Activated CD8-positive, alpha-beta T cell treated with anti-CD3 and anti-CD28 coated beads for 36 hours (primary cell): ENCODE measurements at regions of chr17 and their contacts with region 1.

Region 1: DNA sequence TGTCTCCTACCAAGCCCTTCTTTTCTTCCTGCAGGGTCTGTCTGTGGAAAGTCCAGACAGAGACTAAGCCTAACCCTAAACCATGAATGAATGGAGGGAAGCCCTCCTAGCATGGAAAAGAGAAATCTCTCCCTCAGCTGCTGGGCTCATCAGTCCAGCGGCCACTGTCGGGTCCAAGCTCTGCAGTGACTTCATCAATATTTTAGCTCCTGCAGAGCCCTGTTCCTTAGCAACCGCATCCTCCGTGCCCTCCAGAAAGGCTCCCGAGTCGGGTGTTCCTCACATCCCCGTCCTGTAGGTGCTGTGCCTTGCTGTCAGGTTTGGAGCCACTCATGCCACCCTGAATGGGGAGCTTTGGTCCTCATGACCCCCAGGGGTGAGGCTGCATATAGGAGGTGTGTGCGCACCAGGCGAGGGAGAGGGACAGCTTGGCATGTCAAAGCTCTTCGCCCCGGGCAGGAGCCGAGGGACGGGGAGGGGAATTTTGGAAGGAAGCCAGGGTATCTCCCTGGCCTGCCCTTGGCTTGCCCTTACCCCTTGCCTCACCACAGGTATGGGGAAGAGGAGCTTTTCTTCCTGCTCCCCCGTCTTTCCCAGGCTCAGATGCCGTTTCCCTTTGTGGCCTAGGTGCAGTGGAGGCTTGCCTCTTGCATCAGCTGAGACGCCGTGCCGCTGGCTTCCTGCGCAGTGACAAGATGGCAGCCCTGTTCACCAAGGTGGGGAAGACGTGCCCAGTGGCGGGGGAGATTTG is 23.9 kb downstream of the SGSM2 start:
- DNase-seq: no peak
- ATAC-seq: no peak
- H3K4me3 Mint-ChIP-seq: no peak overlapping the region
- H3K27ac Mint-ChIP-seq: no peak overlapping the region
- H3K4me1 Mint-ChIP-seq: no peaks in the 10 kb centered on the region
- H3K27me3 Mint-ChIP-seq: no peaks in the 10 kb centered on the region
- CTCF ChIP-seq: no peak

Region 2: GRCh38 chr17:2392252-2393173 is 31.3 kb after region 1 on chr17:
- CTCF ChIA-PET with region 1: no interaction called
- POLR2A ChIA-PET with region 1: interaction called, 10 read pairs
- intact Hi-C with region 1: no loop called
- DNase-seq: peak; percentile 97
- ATAC-seq: peak; percentile 73
- H3K4me3 Mint-ChIP-seq: peak overlapping the region; percentile 95
- H3K27ac Mint-ChIP-seq: peak overlapping the region; percentile 95
- H3K4me1 Mint-ChIP-seq: peaks cover 54% of the 10 kb centered on the region
- H3K27me3 Mint-ChIP-seq: no peaks in the 10 kb centered on the region
- CTCF ChIP-seq: no peak